Endothelial cell of umbilical vein (primary cell): ENCODE measurements at regions of chr12 and their contacts with region 1.

Region 1: DNA sequence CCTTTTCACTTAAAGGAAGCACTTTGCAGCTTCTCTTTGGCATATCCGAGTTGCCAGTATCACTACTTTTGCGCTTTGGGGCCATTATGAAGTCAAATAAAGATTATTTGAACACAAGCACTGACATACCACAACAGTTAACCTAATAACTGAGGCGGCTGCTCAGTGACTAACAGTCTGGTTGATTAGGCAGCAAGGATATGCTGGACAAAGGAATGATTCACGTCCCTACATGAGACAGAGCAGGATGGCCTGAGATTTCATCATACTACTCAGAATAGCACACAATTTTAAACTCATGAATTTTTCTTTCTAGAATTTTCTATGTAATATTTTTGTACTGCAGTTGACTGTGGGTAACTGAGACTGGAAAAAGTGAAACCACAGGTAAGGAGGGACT is 56.9 kb upstream of the E2F7 start:
- DNase-seq: peak; percentile 88
- H3K4me3 ChIP-seq: no peak overlapping the region
- H3K27ac ChIP-seq: peak overlapping the region; percentile 96
- H3K4me1 ChIP-seq: peaks cover 42% of the 10 kb centered on the region
- H3K27me3 ChIP-seq: no peaks in the 10 kb centered on the region
- CTCF ChIP-seq: no peak
- POLR2A ChIP-seq: no peak

Region 2: GRCh38 chr12:76533331-76533730 is 588.9 kb before region 1 on chr12:
- CTCF ChIA-PET with region 1: no interaction called
- POLR2A ChIA-PET with region 1: no interaction called
- dilution Hi-C with region 1: no loop called
- intact Hi-C with region 1: no loop called
- DNase-seq: no peak
- H3K4me3 ChIP-seq: no peak overlapping the region
- H3K27ac ChIP-seq: no peak overlapping the region
- H3K4me1 ChIP-seq: no peaks in the 10 kb centered on the region
- H3K27me3 ChIP-seq: no peaks in the 10 kb centered on the region
- CTCF ChIP-seq: no peak
- POLR2A ChIP-seq: no peak

Region 3: GRCh38 chr12:77065361-77066204 is 56.7 kb before region 1 on chr12 and contains the start of gene E2F7:
- CTCF ChIA-PET with region 1: no interaction called
- POLR2A ChIA-PET with region 1: no interaction called
- dilution Hi-C with region 1: no loop called
- intact Hi-C with region 1: loop called (anchors 1 kb)
- DNase-seq: peak; percentile 91
- H3K4me3 ChIP-seq: peak within 1 kb of the TSS; percentile 64 to 90 (median 83)
- H3K27ac ChIP-seq: peak within 1 kb of the TSS; percentile 35
- H3K4me1 ChIP-seq: peaks cover 30% of the 10 kb centered on the region
- H3K27me3 ChIP-seq: no peaks in the 10 kb centered on the region
- CTCF ChIP-seq: no peak
- POLR2A ChIP-seq: peak; percentile 70
- total RNA-seq, gene E2F7: 19.8 and 24.4 TPM in 2 replicates

Region 4: GRCh38 chr12:77133566-77133965 is 11.3 kb after region 1 on chr12:
- CTCF ChIA-PET with region 1: no interaction called
- POLR2A ChIA-PET with region 1: no interaction called
- dilution Hi-C with region 1: no loop called
- intact Hi-C with region 1: loop called (anchors 1 kb)
- DNase-seq: peak; percentile 58
- H3K4me3 ChIP-seq: no peak overlapping the region
- H3K27ac ChIP-seq: no peak overlapping the region
- H3K4me1 ChIP-seq: no peaks in the 10 kb centered on the region
- H3K27me3 ChIP-seq: peaks cover 9 to 10% of the 10 kb centered on the region in 2 experiments
- CTCF ChIP-seq: no peak
- POLR2A ChIP-seq: no peak

Region 5: GRCh38 chr12:77231501-77231918 is 109.3 kb after region 1 on chr12:
- CTCF ChIA-PET with region 1: no interaction called
- POLR2A ChIA-PET with region 1: no interaction called
- dilution Hi-C with region 1: no loop called
- intact Hi-C with region 1: loop called (anchors 1 kb)
- DNase-seq: peak; percentile 93
- H3K4me3 ChIP-seq: no peak overlapping the region
- H3K27ac ChIP-seq: no peak overlapping the region
- H3K4me1 ChIP-seq: peaks cover 30% of the 10 kb centered on the region
- H3K27me3 ChIP-seq: peaks cover 9 to 10% of the 10 kb centered on the region in 2 experiments
- CTCF ChIP-seq: no peak
- POLR2A ChIP-seq: no peak

Region 6: DNA sequence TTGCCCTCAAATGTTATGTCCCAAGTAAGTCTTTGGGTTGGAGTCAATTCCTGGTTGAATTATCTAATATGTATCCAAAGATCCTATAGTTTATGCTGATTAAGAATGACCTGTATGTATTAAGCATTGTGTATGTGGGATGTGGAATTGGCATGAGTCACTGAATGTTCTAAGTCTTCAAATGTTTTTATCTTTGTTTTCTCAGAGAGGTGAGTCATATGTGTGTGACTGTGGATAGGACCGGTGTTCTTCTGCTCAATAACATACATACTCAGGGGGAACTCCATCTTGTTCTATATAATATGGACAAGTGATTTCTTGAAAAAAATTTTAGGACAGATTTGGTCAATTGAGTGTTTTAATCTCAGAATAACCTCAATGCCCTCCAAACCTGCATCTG is 766.4 kb after region 1 on chr12:
- CTCF ChIA-PET with region 1: no interaction called
- POLR2A ChIA-PET with region 1: no interaction called
- dilution Hi-C with region 1: no loop called
- intact Hi-C with region 1: loop called (anchors 1 kb)
- DNase-seq: peak; percentile 97
- H3K4me3 ChIP-seq: no peak overlapping the region
- H3K27ac ChIP-seq: peak overlapping the region; percentile 39
- H3K4me1 ChIP-seq: peaks cover 15% of the 10 kb centered on the region
- H3K27me3 ChIP-seq: no peaks in the 10 kb centered on the region
- CTCF ChIP-seq: no peak
- POLR2A ChIP-seq: no peak